SK-N-SH (cell line): ENCODE measurements at regions of chr9 and their contacts with region 1.

Region 1: GRCh38 chr9:18255158-18255629 is 218.8 kb upstream of the ADAMTSL1 start:
- DNase-seq: peak; percentile 68
- H3K4me3 ChIP-seq: no peak overlapping the region; a peak in 1 of 4 replicates
- H3K27ac ChIP-seq: peak overlapping the region; percentile 25 to 81; a peak in 3 of 4 replicates
- H3K4me1 ChIP-seq: peaks cover 2 to 4% of the 10 kb centered on the region in 2 experiments; a peak in 3 of 4 replicates
- H3K27me3 ChIP-seq: no peaks in the 10 kb centered on the region
- CTCF ChIP-seq: peak; percentile 96
- EP300 ChIP-seq: no peak
- RAD21 ChIP-seq: peak; percentile 96

Region 2: GRCh38 chr9:18114559-18115475 is 140.4 kb before region 1 on chr9:
- CTCF ChIA-PET with region 1: no interaction called
- POLR2A ChIA-PET with region 1: no interaction called
- DNase-seq: no peak
- H3K4me3 ChIP-seq: no peak overlapping the region
- H3K27ac ChIP-seq: no peak overlapping the region
- H3K4me1 ChIP-seq: no peaks in the 10 kb centered on the region
- H3K27me3 ChIP-seq: peaks cover 4% of the 10 kb centered on the region; the same call in 1 of the 2 replicates
- CTCF ChIP-seq: no peak
- EP300 ChIP-seq: no peak
- RAD21 ChIP-seq: no peak

Region 3: GRCh38 chr9:18235181-18235908 is 19.8 kb before region 1 on chr9:
- CTCF ChIA-PET with region 1: interaction called, 14 read pairs
- POLR2A ChIA-PET with region 1: no interaction called
- DNase-seq: no peak
- H3K4me3 ChIP-seq: no peak overlapping the region
- H3K27ac ChIP-seq: no peak overlapping the region
- H3K4me1 ChIP-seq: peaks cover 0 to 12% of the 10 kb centered on the region in 2 experiments; a peak in 1 of 4 replicates
- H3K27me3 ChIP-seq: no peaks in the 10 kb centered on the region
- CTCF ChIP-seq: no peak
- EP300 ChIP-seq: no peak
- RAD21 ChIP-seq: no peak

Region 4: DNA sequence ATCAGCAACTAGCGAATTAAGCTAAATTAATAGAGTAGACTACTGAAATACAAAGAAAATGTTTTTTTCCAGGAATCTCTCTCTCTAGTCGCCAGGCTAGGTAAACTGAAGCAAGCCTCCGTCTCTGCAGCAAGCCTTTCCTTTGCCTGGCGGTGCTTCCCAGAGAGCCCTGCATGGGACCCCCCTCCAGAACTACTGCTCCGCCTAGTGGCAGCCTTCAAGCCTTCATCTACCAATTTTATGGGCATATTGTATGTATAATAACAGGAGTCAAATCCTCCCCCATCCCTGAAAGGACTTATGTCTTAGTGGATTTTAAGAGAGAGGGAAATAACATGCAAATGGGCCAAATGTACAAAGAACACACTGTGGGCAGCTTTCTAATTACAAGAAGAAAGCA is 535.9 kb after region 1 on chr9:
- CTCF ChIA-PET with region 1: interaction called, 10 read pairs
- POLR2A ChIA-PET with region 1: no interaction called
- DNase-seq: peak; percentile 57
- H3K4me3 ChIP-seq: no peak overlapping the region; a peak in 1 of 4 replicates
- H3K27ac ChIP-seq: no peak overlapping the region
- H3K4me1 ChIP-seq: peaks cover under 1 to 20% of the 10 kb centered on the region in 2 experiments; a peak in 3 of 4 replicates
- H3K27me3 ChIP-seq: no peaks in the 10 kb centered on the region
- CTCF ChIP-seq: peak; percentile 48
- EP300 ChIP-seq: no peak
- RAD21 ChIP-seq: peak; percentile 75

Region 5: GRCh38 chr9:19022206-19022605 is 767.0 kb after region 1 on chr9:
- CTCF ChIA-PET with region 1: interaction called, 110 read pairs
- POLR2A ChIA-PET with region 1: no interaction called
- DNase-seq: no peak
- H3K4me3 ChIP-seq: no peak overlapping the region
- H3K27ac ChIP-seq: no peak overlapping the region
- H3K4me1 ChIP-seq: no peaks in the 10 kb centered on the region; a peak in 1 of 4 replicates
- H3K27me3 ChIP-seq: no peaks in the 10 kb centered on the region
- CTCF ChIP-seq: no peak
- EP300 ChIP-seq: no peak
- RAD21 ChIP-seq: no peak

Region 6: GRCh38 chr9:19456996-19457692 is 1202.0 kb after region 1 on chr9:
- CTCF ChIA-PET with region 1: interaction called, 12 read pairs
- POLR2A ChIA-PET with region 1: interaction called, 6 read pairs
- DNase-seq: peak; percentile 84
- H3K4me3 ChIP-seq: peak overlapping the region; percentile 37 to 47
- H3K27ac ChIP-seq: no peak overlapping the region
- H3K4me1 ChIP-seq: peaks cover 0 to 3% of the 10 kb centered on the region in 2 experiments; a peak in 1 of 4 replicates
- H3K27me3 ChIP-seq: no peaks in the 10 kb centered on the region
- CTCF ChIP-seq: peak; percentile 95
- EP300 ChIP-seq: no peak
- RAD21 ChIP-seq: peak; percentile 99